PC-3 (cell line): ENCODE measurements at regions of chr11 and their contacts with region 1.

Region 1: GRCh38 chr11:75946531-75947530 is 131.8 kb downstream of the UVRAG start:
- DNase-seq: peak; percentile 76
- ATAC-seq: peak; percentile 72
- H3K4me3 ChIP-seq: no peak overlapping the region
- H3K27ac ChIP-seq: peak overlapping the region; percentile 45
- H3K4me1 ChIP-seq: peaks cover 17% of the 10 kb centered on the region
- H3K27me3 ChIP-seq: no peaks in the 10 kb centered on the region
- CTCF ChIP-seq: no peak

Region 2: GRCh38 chr11:74720596-74721478 is 1226.0 kb before region 1 on chr11:
- CTCF ChIA-PET with region 1: no interaction called
- POLR2A ChIA-PET with region 1: interaction called, 14 read pairs
- intact Hi-C with region 1: no loop called
- DNase-seq: no peak
- ATAC-seq: no peak
- H3K4me3 ChIP-seq: no peak overlapping the region
- H3K27ac ChIP-seq: no peak overlapping the region
- H3K4me1 ChIP-seq: no peaks in the 10 kb centered on the region
- H3K27me3 ChIP-seq: 0 out of 2 replicates have a peak, but pooled peaks cover 5% of the 10 kb centered on the region
- CTCF ChIP-seq: no peak

Region 3: GRCh38 chr11:76215941-76216340 is 269.1 kb after region 1 on chr11:
- CTCF ChIA-PET with region 1: no interaction called
- POLR2A ChIA-PET with region 1: no interaction called
- intact Hi-C with region 1: no loop called
- DNase-seq: no peak
- ATAC-seq: no peak
- H3K4me3 ChIP-seq: no peak overlapping the region
- H3K27ac ChIP-seq: no peak overlapping the region
- H3K4me1 ChIP-seq: no peaks in the 10 kb centered on the region
- H3K27me3 ChIP-seq: peaks cover 9% of the 10 kb centered on the region
- CTCF ChIP-seq: no peak